K562 (cell line): ENCODE measurements at regions of chr12 and their contacts with region 1.

Region 1: DNA sequence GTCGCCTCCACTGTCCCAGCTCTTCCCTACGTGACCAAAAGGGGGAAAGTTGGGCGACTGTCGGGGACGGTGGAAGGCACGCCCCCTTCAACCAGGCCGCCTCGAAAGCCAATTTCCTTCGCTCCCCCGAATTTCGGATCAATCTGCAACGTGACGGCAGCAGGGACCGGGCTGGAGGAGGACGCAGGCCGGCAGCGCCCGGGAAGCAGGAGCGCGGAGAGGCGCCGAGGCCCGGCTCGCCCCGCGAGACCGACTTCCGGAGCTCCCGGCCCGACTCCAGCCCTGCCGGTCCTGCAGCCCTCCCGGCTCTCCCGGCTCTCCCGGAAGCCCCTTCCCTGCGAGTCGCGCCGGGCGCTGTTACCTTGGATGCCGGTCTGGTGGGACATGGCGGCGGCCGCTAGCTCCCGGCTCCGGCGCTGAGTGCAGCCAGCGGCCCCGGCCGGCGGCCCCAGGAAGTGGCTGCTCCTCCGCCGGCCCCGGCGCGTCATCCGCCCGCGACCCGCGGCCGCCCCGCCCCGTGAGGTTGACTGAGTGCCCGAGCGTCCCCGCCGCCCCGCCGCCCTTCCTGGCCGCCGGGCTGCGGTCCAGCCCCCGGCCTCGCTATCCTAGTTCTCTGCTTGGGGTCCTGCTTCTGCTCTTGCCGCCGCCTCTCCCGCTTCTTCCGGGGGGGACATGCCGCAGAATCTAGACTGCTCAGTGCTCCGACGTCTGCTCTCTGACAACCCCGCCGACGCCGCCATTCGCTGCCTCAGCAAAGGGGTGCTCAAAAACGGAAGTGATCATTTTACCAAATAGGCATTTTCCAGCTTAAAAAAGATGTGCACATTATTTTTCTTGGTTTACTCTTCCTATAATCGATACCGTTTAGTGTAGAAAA is at the start of gene TWF1:
- DNase-seq: peak; percentile 88 to 92 (median 89)
- ATAC-seq: peak; percentile 96
- H3K4me3 ChIP-seq: peak within 1 kb of the TSS; percentile 92
- H3K27ac ChIP-seq: peak within 1 kb of the TSS; percentile 92
- H3K4me1 ChIP-seq: peaks cover 0 to 2% of the 10 kb centered on the region in 2 experiments; a peak in 1 of 5 replicates
- H3K27me3 ChIP-seq: no peaks in the 10 kb centered on the region; a peak in 1 of 5 replicates
- CTCF ChIP-seq: peak; percentile 32 to 48 (median 41); a peak in 5 of 6 replicates
- EP300 ChIP-seq: no peak
- POLR2A ChIP-seq: peak; percentile 93
- RAD21 ChIP-seq: no peak; a peak in 1 of 4 replicates
- polyA plus RNA-seq, gene TWF1: 10.3 to 14.1 TPM

Region 2: GRCh38 chr12:43737646-43738045 is 68.5 kb before region 1 on chr12:
- CTCF ChIA-PET with region 1: no interaction called
- POLR2A ChIA-PET with region 1: no interaction called
- in situ Hi-C with region 1: no loop called
- intact Hi-C with region 1: no loop called
- DNase-seq: no peak
- ATAC-seq: no peak
- H3K4me3 ChIP-seq: no peak overlapping the region
- H3K27ac ChIP-seq: no peak overlapping the region
- H3K4me1 ChIP-seq: no peaks in the 10 kb centered on the region
- H3K27me3 ChIP-seq: no peaks in the 10 kb centered on the region
- CTCF ChIP-seq: no peak
- EP300 ChIP-seq: no peak
- POLR2A ChIP-seq: no peak
- RAD21 ChIP-seq: no peak

Region 3: GRCh38 chr12:43758728-43759563 is 47.2 kb before region 1 on chr12 and contains the starts of genes IRAK4 and PUS7L:
- CTCF ChIA-PET with region 1: no interaction called
- POLR2A ChIA-PET with region 1: no interaction called
- in situ Hi-C with region 1: no loop called
- intact Hi-C with region 1: loop called (anchors 5 kb)
- DNase-seq: peak; percentile 93 to 98 (median 94)
- ATAC-seq: peak; percentile 92
- H3K4me3 ChIP-seq: peak within 1 kb of the TSS; percentile 73
- H3K27ac ChIP-seq: peak within 1 kb of the TSS; percentile 92
- H3K4me1 ChIP-seq: peaks cover 4 to 13% of the 10 kb centered on the region in 2 experiments; a peak in 3 of 5 replicates
- H3K27me3 ChIP-seq: no peaks in the 10 kb centered on the region
- CTCF ChIP-seq: peak; percentile 51 to 66 (median 65); a peak in 5 of 6 replicates
- EP300 ChIP-seq: peak; percentile 16; the same call in 1 of the 2 replicates
- POLR2A ChIP-seq: peak; percentile 86
- RAD21 ChIP-seq: peak; percentile 15 to 32; a peak in 2 of 4 replicates
- polyA plus RNA-seq, gene IRAK4: 10.8 to 12.8 TPM
- polyA plus RNA-seq, gene PUS7L: 11.4 to 46.0 TPM

Region 4: DNA sequence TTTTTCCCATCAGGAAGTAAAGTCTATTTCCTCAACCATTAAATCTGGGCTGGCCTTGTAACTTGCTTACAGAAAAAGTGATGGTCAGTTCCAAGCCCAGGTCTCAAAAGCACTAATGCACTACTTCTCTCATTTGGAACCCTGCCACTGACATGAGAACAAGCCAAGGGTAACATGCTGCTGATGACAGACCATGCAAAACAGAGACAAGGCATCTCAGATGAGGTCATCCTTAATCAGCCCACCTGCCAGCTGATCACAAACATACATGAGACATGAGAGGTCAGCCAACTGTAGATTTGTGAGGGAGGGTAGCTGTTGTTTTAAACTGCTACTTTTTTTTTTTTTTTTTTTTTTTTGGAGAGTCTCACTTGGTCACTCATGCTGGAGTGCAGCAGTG is 16.2 kb before region 1 on chr12:
- CTCF ChIA-PET with region 1: no interaction called
- POLR2A ChIA-PET with region 1: interaction called, 12 read pairs
- in situ Hi-C with region 1: no loop called
- intact Hi-C with region 1: no loop called
- DNase-seq: peak in 3 of 4 experiments; percentile 10 to 13 (median 12)
- ATAC-seq: peak; percentile 67
- H3K4me3 ChIP-seq: no peak overlapping the region
- H3K27ac ChIP-seq: no peak overlapping the region
- H3K4me1 ChIP-seq: peaks cover 0 to 4% of the 10 kb centered on the region in 2 experiments; a peak in 1 of 5 replicates
- H3K27me3 ChIP-seq: no peaks in the 10 kb centered on the region
- CTCF ChIP-seq: no peak
- EP300 ChIP-seq: peak; percentile 43; the same call in 1 of the 2 replicates
- POLR2A ChIP-seq: no peak
- RAD21 ChIP-seq: no peak